T-cell (primary cell): ENCODE measurements at regions of chr10 and their contacts with region 1.

Region 1: DNA sequence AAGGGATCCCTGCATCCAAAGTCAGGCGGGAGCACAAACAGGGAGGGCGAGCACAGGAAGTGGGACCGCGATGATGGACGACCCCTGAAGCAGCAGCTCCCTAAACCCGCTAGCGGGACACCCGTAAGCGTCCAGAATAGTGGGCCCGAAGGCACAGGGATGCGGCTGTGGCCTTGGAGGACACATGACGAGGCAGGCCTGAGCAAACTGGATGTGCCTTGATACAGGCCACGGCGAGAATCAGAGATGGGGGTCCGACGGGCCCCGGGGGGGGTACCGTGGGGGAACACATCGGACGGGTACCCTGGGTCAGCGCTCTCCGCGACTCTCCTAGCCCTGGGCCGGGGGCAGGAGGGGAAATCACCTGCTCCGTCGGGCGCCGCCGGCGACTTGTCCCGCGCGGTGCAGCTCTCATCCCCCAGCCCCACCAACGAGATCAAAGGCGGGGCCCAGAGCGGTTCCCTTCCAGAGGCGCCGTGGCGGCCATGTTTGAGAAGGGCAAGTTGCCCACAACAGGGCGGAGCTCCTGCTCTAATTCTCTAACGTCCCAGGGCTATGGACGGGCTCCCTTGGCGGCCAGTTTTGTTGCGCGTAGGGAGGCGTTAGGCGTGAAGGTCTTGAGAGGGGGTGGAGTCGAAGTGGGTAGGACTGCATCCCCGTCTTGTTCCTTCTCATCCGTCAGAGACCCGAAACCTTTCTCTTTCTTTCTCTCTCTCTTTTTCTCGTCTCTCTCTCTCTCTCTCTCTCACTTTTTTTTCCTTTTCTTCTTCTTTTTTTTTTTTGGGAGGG is at the start of gene CUEDC2:
- DNase-seq: peak; percentile 80 to 99 (median 89)
- ATAC-seq: peak; percentile 93 to 94 (median 94)
- H3K4me3 ChIP-seq: peak within 1 kb of the TSS; percentile 68 to 86
- H3K4me3 Mint-ChIP-seq: peak within 1 kb of the TSS; percentile 92 to 95 (median 93)
- H3K27ac ChIP-seq: peak within 1 kb of the TSS; percentile 32
- H3K27ac Mint-ChIP-seq: peak within 1 kb of the TSS; percentile 93 to 97
- H3K4me1 ChIP-seq: peaks cover 36 to 56% of the 10 kb centered on the region in 2 experiments
- H3K4me1 Mint-ChIP-seq: peaks cover 47 to 59% (median 51%) of the 10 kb centered on the region in 3 donors
- H3K27me3 ChIP-seq: peaks cover 0 to 4% of the 10 kb centered on the region in 2 experiments
- H3K27me3 Mint-ChIP-seq: no peaks in the 10 kb centered on the region
- total RNA-seq, gene CUEDC2: 32.2 to 41.4 (median 37.8) TPM

Region 2: DNA sequence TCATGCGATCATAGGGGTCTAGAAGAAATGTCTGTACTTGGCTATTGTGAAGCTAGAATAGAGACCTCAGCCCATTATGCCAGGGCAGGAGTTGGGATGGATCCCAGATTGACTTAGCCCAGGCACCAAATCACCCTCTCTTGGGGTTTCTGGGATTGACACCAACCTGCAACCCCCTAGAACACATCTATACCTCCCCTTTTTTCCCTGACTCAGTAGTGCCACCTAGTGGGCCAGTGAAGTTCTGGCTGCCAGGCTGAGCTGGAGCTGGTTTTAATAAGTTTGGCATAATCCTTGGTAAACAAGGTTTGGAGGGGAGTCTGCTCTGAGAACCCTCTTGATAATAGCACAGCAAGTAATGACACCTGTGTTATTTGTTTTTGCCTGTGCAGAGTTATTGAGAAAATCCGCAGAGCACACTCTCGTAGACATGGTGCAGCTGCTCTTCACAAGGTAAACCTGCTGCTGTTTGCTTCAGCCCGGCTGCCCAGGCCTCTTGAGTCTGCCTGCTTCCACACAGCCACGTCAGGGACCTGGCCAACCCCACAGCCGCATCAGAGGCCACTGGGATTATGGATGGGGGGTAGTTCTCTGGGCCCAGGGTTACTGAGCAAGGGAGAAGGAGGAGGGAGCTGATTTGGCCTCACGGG is 80.2 kb before region 1 on chr10:
- CTCF ChIA-PET with region 1: no interaction called
- POLR2A ChIA-PET with region 1: no interaction called
- DNase-seq: peak; percentile 20 to 84 (median 62)
- ATAC-seq: peak; percentile 67 to 70 (median 68)
- H3K4me3 ChIP-seq: no peak overlapping the region
- H3K4me3 Mint-ChIP-seq: no peak overlapping the region
- H3K27ac ChIP-seq: no peak overlapping the region
- H3K27ac Mint-ChIP-seq: no peak overlapping the region
- H3K4me1 ChIP-seq: no peaks in the 10 kb centered on the region
- H3K4me1 Mint-ChIP-seq: no peaks in the 10 kb centered on the region
- H3K27me3 ChIP-seq: no peaks in the 10 kb centered on the region
- H3K27me3 Mint-ChIP-seq: no peaks in the 10 kb centered on the region

Region 3: DNA sequence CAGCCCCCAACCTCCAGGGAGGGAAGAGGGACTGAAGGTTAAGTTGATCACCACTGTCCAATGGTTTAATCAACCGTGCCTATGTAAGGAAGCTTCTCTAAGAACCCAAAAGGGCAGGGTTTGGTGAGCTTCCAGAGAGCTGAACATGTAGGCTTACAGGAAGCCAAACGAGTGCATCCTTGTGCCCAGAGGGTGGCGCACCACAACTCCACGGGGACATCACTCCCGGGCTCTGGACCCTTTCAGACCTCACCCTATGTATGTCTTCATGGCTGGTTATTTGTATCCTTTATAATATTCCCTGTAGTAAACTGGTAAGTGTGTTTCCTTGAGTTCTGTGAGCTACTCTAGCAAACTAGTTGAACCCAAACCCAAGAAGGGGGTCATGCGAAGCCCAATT is 48.3 kb before region 1 on chr10:
- CTCF ChIA-PET with region 1: interaction called in 1 of 2 experiments, 10 read pairs
- POLR2A ChIA-PET with region 1: no interaction called
- DNase-seq: peak in 3 of 35 experiments; percentile 9 to 47 (median 18)
- ATAC-seq: peak in 1 of 4 experiments; percentile 54
- H3K4me3 ChIP-seq: no peak overlapping the region
- H3K4me3 Mint-ChIP-seq: no peak overlapping the region
- H3K27ac ChIP-seq: no peak overlapping the region
- H3K27ac Mint-ChIP-seq: no peak overlapping the region
- H3K4me1 ChIP-seq: no peaks in the 10 kb centered on the region
- H3K4me1 Mint-ChIP-seq: peaks cover 0 to 2% (median 0%) of the 10 kb centered on the region in 3 donors
- H3K27me3 ChIP-seq: no peaks in the 10 kb centered on the region
- H3K27me3 Mint-ChIP-seq: no peaks in the 10 kb centered on the region